ENCODE measurements at regions of chr20 and their contacts with region 1.

Region 1: GRCh38 chr20:1291191-1291741 is 25.2 kb downstream of the SNPH start:
- DNase-seq: peak; percentile 29

Region 2: GRCh38 chr20:982754-983153 is 308.5 kb before region 1 on chr20:
- intact Hi-C with region 1: no loop called
- DNase-seq: no peak

Region 3: GRCh38 chr20:2430538-2430937 is 1139.3 kb after region 1 on chr20:
- intact Hi-C with region 1: loop called in 1 of 2 experiments (anchors 5 kb)
- DNase-seq: no peak

Measured in posterior vena cava (tissue), 2 donors.